Right ventricle myocardium superior (tissue), 1 donor: ENCODE measurements at regions of chr18 and their contacts with region 1.

Region 1: DNA sequence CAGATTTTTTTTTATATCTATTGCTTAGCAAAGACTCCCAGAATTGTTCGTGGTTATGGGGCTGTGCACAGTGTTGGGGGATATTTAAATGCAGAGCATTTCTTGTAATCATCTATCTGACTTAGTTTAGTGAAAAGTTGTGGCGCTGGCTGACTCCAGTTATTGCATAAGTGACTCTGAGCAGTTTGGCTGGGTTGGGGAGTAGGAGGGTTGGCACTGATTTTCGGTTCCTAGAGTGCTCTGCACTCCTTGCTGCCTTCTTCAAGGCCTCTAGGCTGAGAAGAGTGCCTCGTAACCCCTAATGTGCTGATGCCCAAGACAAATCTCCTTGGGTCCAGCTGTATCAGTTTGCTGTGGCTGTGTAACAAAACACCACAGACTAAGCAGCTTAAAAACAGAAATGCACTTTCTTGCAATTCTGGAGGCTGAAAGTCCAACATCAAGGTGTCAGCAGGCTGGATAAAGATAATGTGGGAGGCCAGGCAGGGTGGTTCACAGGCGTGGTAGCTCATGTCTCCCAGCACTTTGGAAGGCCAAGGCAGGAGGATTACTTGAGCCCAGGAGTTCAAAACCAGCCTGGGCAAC is 6.5 kb upstream of the IMPA2 start:
- DNase-seq: no peak
- ATAC-seq: no peak

Region 2: DNA sequence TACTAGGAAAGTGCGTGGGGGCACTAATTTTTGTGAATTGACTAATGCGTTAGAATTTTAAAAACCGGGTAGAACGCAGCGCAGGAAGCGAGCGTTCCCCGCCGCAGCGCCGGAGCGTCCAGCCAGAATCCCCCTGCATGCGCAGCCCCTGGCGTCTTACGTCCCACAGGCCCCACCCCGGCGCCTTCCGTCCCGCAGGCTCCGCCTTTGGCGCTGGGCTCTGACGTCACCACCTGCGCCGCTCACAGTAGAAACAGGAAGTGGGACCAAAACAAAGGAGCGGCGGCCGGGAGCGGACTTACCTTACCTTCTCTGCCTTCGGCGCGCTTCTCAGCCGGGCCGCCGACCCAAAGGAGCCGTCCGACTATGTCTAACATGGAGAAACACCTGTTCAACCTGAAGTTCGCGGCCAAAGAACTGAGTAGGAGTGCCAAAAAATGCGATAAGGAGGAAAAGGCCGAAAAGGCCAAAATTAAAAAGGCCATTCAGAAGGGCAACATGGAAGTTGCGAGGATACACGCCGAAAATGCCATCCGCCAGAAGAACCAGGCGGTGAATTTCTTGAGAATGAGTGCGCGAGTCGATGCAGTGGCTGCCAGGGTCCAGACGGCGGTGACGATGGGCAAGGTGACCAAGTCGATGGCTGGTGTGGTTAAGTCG is 123.6 kb before region 1 on chr18 and contains the start of gene CHMP1B:
- intact Hi-C with region 1: no loop called
- DNase-seq: peak; percentile 100
- ATAC-seq: peak; percentile 99
- total RNA-seq, gene CHMP1B: 26.5 TPM

Region 3: DNA sequence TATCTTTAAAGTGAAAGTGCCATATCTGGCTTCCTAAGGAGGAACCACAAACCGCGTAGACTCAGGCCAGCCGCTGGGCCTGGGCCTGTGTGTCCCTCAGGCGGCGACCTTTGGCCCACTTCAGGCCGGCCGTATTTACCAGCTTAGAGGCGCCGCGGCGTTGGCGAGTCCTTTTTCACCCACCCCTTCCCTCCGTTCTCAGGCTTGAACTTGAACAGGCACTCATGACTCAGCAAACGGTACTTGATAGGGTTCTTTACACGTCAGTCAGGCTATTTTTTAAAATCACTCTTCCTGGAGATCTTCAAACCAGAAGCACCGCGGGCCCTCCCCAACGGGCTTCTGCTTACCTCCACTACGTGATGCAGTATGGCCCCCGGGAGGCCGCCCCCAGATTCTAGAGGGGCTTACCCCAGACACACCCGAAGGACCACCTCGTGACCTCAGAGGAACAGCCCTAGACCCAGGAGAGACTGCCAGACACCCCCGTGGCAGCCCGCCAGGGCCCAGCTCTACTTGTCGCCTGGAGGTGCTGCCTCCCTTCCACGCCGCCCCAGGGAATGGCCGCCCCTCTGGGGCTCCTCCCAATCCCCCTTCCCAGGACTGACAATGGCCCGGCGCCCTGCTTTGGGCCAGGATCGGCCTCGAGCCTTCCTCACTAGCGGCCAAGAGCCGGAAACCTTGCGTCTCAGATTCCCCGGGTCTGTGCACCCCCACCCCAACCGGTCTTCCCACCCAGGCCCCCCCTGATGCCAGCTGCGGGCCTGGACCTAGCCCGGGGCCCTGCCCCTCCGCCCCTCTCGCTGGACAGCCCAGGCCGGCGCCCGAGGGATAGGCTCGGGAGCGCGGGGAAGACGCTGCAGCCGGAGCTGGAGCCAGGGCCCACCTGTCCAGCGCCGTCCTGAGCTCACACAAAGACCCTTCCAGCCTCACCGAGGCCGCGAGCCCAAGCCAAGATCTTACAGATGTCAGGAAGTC is 27.3 kb before region 1 on chr18:
- intact Hi-C with region 1: loop called (anchors 2 kb)
- DNase-seq: peak; percentile 97
- ATAC-seq: peak; percentile 98